ENCODE measurements at regions of chr4 and their contacts with region 1.

Region 1: DNA sequence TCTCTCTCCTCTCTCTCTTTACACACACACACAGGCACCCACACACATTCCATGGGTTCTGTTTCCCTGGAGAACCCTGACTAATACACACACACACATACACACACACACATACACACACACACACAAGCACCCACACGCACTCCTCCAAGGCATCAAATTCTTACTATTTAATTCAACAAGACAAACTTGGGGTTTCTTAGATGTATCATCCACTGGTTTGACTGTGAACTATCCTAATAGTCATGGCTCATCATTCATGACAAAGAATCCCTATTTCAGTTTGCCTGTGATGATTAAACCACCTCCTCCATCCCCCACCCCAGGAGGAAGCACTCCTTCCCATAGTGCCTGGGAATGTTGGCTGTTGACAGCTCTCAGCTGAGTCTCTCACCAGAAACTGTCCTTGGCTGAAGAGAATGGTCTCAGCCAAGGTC is 98.2 kb downstream of the USP46 start:
- DNase-seq: no peak
- ATAC-seq: peak; percentile 62

Region 2: DNA sequence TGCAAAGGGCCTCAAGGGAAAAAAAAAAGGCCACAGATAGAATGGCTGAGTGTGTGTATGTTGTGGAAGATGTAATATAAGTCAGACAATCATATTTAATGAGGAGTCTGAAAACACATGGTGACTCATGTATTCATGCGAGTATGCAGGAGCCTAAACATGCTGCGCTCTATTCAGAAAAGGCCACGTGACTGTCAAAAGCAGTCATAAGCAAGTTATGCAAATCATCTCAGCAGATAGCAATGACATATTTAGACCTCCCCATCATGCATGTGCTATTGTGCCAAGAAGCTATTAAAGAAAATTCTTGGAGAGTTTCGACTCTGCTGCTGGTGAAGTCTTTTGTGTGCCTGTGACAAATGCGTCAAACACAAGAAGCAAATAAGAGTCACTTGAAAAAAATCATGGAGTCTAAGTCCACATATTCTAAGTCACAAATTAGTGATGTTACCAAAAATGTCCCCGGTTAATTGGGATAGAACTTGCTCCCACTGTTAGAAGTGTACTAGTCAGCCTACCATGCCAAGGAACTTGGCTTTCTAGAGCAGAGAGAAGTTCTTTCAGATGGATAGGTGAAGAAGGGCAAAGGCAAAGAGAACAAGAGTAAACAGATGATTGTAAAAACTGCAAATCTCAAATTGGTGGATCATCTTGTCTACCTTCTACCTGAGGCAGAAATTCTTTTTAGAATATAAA is 1025.4 kb after region 1 on chr4:
- intact Hi-C with region 1: loop called (anchors 10 kb)
- DNase-seq: no peak
- ATAC-seq: no peak

Measured in sciatic nerve (tissue), 2 donors.